HCT116 (cell line): ENCODE measurements at regions of chr4 and their contacts with region 1.

Region 1: DNA sequence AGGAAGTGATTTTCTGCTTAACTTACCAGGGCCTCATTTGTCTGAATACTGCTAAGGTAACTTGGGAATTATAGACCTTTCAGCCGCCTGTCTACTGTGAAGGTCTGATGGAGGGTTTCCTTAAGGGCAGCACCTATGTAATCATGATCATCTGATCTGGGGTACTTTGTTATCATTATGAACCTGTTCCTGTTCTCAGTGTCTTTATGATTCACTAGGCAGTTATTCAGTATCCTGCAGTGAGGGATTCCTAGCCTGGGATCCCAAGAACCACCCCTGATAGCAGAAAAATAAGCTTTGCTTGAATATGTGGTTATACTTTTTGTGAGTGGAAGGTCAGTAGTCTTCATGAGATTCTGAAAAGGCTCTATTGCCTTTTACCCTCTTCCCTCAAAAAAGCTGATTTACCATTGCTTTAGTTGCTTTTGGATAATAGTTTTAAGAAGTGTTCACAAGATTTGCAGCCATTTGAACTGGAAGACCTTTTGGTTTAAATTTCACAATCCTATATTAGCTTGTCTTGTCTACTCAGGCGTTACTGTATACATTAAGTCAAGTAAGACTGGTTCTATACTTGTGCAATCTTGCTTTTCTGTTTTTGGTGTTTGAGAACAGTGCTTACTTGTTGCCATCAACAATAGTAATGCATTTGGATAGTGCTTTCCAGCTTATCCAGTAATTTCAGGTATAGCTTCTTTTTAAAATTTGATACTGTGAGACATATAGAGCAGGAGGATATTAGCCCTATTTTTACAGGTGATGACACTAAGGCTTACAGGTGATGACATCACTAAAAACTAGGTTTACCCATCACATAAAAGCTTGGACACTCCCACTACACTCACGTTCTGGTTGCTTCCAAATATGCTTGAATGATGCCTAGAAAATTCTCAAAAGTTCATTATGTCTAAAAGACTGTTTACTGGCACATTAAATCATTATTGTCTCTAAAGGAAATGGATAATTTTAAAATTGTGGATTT is 60.0 kb downstream of the FHIP1A start:
- DNase-seq: no peak
- ATAC-seq: peak; percentile 47; the same call in 1 of the 2 replicates
- H3K4me3 ChIP-seq: no peak overlapping the region
- H3K27ac ChIP-seq: no peak overlapping the region
- H3K4me1 ChIP-seq: peaks cover 0 to 11% of the 10 kb centered on the region in 2 experiments; a peak in 1 of 4 replicates
- H3K27me3 ChIP-seq: no peaks in the 10 kb centered on the region
- CTCF ChIP-seq: no peak
- POLR2A ChIP-seq: no peak
- RAD21 ChIP-seq: no peak

Region 2: GRCh38 chr4:151454513-151454912 is 14.5 kb before region 1 on chr4:
- CTCF ChIA-PET with region 1: no interaction called
- POLR2A ChIA-PET with region 1: interaction called, 10 read pairs
- RAD21 ChIA-PET with region 1: no interaction called
- intact Hi-C with region 1: no loop called
- DNase-seq: no peak
- ATAC-seq: no peak
- H3K4me3 ChIP-seq: no peak overlapping the region
- H3K27ac ChIP-seq: no peak overlapping the region
- H3K4me1 ChIP-seq: no peaks in the 10 kb centered on the region
- H3K27me3 ChIP-seq: no peaks in the 10 kb centered on the region
- CTCF ChIP-seq: no peak
- POLR2A ChIP-seq: no peak
- RAD21 ChIP-seq: no peak